Posterior cingulate gyrus (tissue), 11 donors: ENCODE measurements at regions of chr15 and their contacts with region 1.

Region 1: DNA sequence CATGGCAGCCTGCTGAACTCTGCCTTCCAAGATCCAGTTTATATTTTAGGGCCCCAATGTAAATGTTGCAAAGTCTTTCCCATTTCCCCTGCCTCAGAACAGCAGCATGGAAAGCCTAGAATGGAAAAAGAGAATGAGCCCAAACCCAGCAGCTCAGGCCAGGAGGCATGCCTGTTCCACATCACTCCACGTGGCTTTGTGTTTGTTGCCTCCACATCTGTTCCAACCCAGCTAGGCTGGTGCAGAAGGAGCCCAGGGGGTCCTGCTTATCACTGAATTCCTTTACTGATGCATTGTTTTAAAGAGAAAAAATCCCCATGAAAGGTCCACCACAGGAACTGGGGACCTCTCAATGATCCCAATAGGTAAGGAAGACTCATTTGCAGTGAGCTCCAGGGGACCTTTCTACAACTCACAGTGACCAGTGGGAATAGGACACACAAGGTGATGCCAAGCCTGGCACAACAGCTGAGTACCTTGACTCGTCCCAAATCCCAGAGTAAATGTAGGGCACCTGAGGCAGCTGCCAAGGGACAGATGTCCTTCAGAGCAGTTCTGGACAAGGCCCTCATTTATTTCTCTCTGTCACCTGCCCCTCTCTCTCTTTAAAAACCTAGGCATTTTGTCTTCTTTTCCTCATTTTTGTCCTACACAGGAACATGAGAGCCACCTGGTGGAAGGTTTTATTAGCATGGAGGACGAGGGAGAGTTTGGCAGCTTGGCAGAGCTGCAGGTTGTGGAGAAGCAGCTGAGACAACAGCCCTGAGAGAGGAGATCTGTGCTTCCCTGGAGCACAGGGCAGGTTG is 41.7 kb upstream of the ADAMTS17 start:
- DNase-seq: peak in 2 of 10 donors; percentile 3 to 58

Region 2: DNA sequence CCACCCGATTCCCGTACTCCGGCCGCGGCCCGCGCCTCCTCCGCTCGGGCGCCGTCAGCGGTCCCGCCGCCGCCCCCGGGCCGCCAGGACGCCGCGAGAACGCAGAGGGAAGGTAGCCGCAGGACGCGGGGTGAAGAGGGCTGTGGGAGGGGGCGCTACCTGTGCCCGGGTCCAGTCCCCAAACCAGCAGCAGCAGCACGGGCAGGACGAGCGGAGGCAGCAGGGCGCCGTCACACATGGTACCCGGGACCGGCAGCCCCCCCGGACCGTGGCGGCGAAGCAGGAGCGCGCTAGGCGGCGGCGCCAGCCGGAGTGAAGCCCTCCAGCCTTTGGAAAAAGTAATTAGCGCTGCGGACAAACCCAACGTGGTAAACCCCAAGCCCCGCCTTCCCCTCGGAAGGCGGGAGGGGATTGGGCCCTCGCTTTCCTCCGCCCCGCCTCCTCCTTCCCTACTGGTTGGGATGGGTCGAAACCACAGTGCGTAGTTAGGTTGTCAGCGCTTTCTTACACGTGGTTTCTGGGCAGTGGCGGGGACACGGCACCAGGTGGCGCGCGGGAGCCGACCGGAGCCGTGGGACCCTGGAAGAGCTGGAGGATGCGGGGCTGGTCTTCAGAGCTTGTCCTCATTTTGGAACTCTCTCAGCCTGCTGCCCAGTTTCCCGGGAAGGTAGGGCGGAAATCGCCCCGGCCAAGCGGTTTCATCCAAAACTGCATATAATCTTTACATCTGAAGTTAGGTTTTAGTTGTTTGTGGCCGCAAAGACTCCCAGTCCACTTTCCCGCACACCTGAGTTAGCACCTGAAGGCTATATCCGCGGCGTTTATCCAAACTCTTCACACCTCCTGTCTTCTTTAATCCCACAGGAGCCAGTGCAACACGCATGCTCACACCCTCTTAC is 41.6 kb before region 1 on chr15 and contains the start of gene ADAMTS17:
- intact Hi-C with region 1: loop called (anchors 5 kb)
- DNase-seq: peak; percentile 91 to 99 (median 95)

Region 3: DNA sequence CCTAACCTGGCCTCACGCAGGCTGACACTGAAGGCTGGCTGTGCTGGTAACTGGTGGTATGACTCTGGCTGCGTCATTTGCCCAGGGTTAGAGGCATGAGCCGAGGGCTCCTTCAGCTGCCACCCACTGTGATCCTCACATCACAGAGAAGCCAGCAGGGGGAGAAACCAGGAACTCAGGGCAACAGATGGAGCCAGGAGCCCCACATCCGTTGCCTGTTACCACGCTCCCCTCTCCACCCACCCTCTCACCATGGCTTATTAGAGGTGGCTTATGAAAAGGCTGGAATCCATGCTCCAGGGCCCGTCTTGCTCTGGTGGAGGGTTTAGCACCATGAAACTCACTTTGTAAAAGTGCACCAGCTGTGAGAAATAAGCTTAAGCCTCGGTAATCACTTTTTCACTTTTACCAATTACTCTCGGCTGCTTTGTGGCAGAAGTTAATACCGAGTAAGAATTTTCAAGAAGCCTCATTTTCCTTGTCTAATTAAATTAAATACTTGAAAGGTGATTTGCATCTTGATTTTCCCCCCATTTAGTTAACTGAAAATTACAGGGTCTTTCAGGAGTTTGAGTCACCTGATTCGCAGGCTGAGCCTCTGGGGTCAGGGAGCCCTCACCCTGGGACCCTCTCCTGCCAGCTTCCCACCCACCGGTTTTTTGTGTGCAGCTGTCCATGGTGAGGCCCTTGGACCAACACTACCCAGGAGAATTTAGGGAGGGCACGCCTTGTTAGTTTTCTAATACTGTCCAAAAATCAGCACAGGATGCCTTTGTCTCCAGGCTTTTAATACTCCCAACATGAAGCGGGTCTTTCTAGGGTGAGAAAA is 279.8 kb after region 1 on chr15:
- intact Hi-C with region 1: no loop called
- DNase-seq: no peak